CD4-positive, alpha-beta T cell (primary cell): ENCODE measurements at regions of chr15 and their contacts with region 1.

Region 1: DNA sequence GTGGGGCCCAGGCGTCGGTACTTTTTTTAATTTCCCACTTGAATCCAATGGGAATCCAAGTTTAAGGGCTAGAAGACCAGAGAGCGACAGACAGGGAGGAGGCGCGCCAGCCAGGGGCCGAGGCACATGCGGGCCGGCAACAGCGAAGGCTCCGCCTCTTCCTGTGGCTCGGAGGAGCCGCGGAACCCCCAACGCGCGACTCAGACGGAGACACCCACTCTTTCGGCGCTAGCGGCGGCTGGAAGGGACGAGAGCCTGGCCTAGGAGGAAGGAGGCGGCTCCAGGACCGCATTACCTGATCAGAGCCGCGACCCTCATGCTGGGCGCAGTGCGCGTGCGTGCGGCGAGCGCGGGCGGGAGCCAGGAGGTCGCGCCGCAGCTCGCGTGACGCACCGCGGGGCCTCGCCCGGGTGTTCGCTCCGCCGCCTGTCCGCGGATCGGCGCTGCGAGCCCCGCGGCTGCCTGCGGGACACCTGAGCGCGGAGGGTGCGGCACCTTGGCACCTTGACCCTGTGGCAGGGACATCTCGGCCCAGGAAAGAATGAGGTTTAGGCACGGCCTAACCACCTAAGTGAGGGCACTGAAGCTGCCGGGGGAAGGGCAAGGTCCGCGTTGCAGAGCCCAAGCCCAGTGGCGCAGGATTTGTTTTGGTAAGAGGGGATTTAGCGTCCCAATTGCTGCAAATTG is at the start of gene DPH6:
- DNase-seq: peak; percentile 56 to 92 (median 76)
- ATAC-seq: peak; percentile 82
- H3K4me3 ChIP-seq: peak within 1 kb of the TSS; percentile 78
- H3K4me3 Mint-ChIP-seq: peak within 1 kb of the TSS; percentile 93
- H3K27ac ChIP-seq: peak within 1 kb of the TSS; percentile 79 to 94
- H3K27ac Mint-ChIP-seq: peak within 1 kb of the TSS; percentile 96
- H3K4me1 ChIP-seq: peaks cover 16% of the 10 kb centered on the region
- H3K4me1 Mint-ChIP-seq: peaks cover 32% of the 10 kb centered on the region
- H3K27me3 ChIP-seq: no peaks in the 10 kb centered on the region
- H3K27me3 Mint-ChIP-seq: no peaks in the 10 kb centered on the region
- CTCF ChIP-seq: no peak
- total RNA-seq, gene DPH6: 7.0 to 8.0 TPM

Region 2: DNA sequence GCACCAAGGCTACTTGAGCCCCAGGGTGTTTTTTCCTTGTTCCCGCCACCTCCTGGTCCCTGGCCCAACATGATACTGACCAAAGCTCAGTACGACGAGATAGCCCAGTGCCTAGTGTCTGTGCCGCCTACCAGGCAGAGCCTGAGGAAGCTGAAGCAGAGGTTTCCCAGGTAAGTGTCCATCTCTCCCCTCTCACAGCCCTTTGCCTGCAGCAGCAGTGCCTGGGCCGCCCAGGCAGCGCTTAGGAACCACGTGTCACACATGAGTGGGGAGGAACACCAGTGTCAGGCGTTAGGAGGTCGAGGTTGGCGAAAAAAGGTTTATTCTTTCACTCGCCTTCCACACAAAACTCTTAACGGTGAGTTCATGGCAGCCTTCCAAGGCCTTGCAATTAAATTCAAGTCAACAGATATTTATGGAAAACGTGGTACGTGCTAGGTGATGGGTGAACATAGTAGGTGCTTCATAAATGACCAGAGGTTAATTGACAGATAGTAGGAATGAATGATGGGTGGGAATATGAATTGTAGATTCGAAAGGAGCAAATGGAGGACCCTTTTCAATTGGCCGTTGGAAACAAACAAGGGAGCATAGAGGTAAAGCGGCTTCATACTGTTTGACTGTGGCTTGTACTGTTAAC is 1033.9 kb after region 1 on chr15:
- CTCF ChIA-PET with region 1: no interaction called
- POLR2A ChIA-PET with region 1: interaction called, 6 read pairs
- intact Hi-C with region 1: loop called (anchors 5 to 10 kb)
- DNase-seq: peak in 10 of 14 experiments; percentile 2 to 53 (median 12)
- ATAC-seq: peak; percentile 22
- H3K4me3 ChIP-seq: peak overlapping the region; percentile 67
- H3K4me3 Mint-ChIP-seq: peak overlapping the region; percentile 91
- H3K27ac ChIP-seq: peak overlapping the region in 1 of 2 donors; percentile 85
- H3K27ac Mint-ChIP-seq: peak overlapping the region; percentile 87
- H3K4me1 ChIP-seq: peaks cover 9% of the 10 kb centered on the region
- H3K4me1 Mint-ChIP-seq: peaks cover 37% of the 10 kb centered on the region
- H3K27me3 ChIP-seq: no peaks in the 10 kb centered on the region
- H3K27me3 Mint-ChIP-seq: no peaks in the 10 kb centered on the region
- CTCF ChIP-seq: no peak